Breast epithelium (tissue), 4 donors: ENCODE measurements at regions of chr2 and their contacts with region 1.

Region 1: GRCh38 chr2:136482966-136483365 is 282.4 kb upstream of the THSD7B start:
- DNase-seq: no peak
- H3K4me3 ChIP-seq: no peak overlapping the region
- H3K27ac ChIP-seq: no peak overlapping the region
- H3K4me1 ChIP-seq: no peaks in the 10 kb centered on the region
- H3K27me3 ChIP-seq: peaks cover 0 to 10% of the 10 kb centered on the region in 2 donors
- CTCF ChIP-seq: no peak
- POLR2A ChIP-seq: no peak

Region 2: DNA sequence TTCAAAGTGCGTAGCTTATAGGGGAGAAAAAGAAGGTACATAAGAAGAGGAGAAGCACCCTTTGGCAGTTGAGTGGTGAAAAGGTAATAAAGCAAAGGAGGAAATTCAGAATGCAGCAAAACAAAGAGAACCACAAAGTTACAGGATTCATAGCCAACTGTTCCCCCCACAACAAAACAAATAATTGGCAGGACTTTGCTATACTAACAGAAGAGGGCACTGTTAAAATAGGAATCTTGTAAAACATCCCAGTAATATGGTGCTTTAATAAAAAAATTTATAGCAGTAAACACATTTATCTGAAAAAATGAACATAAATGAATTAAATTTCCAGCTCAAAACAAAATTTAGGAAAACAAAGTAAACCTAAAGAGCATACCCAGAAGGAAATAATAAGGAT is 909.3 kb before region 1 on chr2:
- intact Hi-C with region 1: no loop called
- DNase-seq: no peak
- H3K4me3 ChIP-seq: no peak overlapping the region
- H3K27ac ChIP-seq: no peak overlapping the region
- H3K4me1 ChIP-seq: no peaks in the 10 kb centered on the region
- H3K27me3 ChIP-seq: no peaks in the 10 kb centered on the region
- CTCF ChIP-seq: no peak
- POLR2A ChIP-seq: no peak

Region 3: GRCh38 chr2:136025057-136025973 is 457.7 kb before region 1 on chr2:
- intact Hi-C with region 1: loop called (anchors 5 kb)
- DNase-seq: peak in 1 of 2 donors; percentile 62
- H3K4me3 ChIP-seq: peak overlapping the region in 2 of 3 donors; percentile 5 to 47
- H3K27ac ChIP-seq: no peak overlapping the region
- H3K4me1 ChIP-seq: no peaks in the 10 kb centered on the region
- H3K27me3 ChIP-seq: no peaks in the 10 kb centered on the region
- CTCF ChIP-seq: no peak
- POLR2A ChIP-seq: no peak

Region 4: DNA sequence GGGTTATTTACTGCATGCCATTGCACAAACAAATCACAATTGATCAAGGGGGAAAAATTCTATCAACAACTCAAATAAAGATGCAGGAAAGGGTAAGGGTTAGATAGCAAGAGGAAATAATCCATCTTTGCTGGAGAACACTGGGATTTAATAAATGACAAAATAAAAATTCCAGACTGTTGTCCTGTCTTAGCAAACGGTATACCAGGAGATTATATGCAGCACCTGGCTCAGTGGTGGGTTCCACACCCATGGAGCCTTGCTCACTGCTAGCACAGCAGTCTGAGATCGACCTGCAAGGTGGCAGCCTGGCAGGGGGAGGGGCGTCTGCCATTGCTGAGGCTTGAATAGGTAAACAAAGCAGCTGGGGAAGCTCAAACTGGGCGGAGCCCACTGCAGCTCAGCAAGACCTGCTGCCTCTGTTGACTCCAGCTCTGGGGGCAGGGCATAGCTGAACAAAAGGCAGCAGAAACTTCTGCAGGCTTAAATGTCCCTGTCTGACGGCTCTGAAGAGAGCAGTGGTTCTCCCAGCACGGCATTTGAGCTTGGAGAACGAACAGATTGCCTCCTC is 14.1 kb before region 1 on chr2:
- intact Hi-C with region 1: loop called (anchors 2 kb)
- DNase-seq: no peak
- H3K4me3 ChIP-seq: no peak overlapping the region
- H3K27ac ChIP-seq: no peak overlapping the region
- H3K4me1 ChIP-seq: no peaks in the 10 kb centered on the region
- H3K27me3 ChIP-seq: no peaks in the 10 kb centered on the region
- CTCF ChIP-seq: no peak
- POLR2A ChIP-seq: no peak